Ovary (tissue), 10 donors: ENCODE measurements at regions of chr6 and their contacts with region 1.

Region 1: DNA sequence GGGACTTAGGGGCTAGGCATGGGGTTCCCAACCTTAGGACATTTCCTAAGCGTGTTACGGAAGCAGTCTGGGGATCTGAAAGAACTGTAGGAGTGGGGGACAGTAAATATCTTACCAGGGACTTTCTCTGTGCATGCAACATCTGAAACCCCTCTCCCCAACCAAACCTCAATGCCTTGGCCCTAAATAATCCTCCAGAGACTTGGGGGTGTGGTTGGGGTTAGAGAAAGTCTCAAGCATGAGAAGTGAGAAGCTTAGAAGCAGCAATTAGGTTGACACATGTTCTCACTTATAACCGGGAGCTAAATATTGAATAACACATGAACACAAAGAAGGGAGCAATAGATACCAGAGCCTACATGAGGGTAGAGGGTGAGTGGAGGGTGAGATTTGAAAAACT is 74.7 kb downstream of the HTR1E start:
- DNase-seq: no peak
- H3K4me3 ChIP-seq: no peak overlapping the region
- H3K27ac ChIP-seq: no peak overlapping the region
- H3K4me1 ChIP-seq: no peaks in the 10 kb centered on the region
- H3K27me3 ChIP-seq: no peaks in the 10 kb centered on the region
- CTCF ChIP-seq: no peak
- EP300 ChIP-seq: no peak
- POLR2A ChIP-seq: no peak

Region 2: GRCh38 chr6:86502497-86502896 is 509.5 kb before region 1 on chr6:
- intact Hi-C with region 1: no loop called
- DNase-seq: no peak
- H3K4me3 ChIP-seq: no peak overlapping the region
- H3K27ac ChIP-seq: no peak overlapping the region
- H3K4me1 ChIP-seq: no peaks in the 10 kb centered on the region
- H3K27me3 ChIP-seq: no peaks in the 10 kb centered on the region
- CTCF ChIP-seq: no peak
- EP300 ChIP-seq: no peak
- POLR2A ChIP-seq: no peak

Region 3: DNA sequence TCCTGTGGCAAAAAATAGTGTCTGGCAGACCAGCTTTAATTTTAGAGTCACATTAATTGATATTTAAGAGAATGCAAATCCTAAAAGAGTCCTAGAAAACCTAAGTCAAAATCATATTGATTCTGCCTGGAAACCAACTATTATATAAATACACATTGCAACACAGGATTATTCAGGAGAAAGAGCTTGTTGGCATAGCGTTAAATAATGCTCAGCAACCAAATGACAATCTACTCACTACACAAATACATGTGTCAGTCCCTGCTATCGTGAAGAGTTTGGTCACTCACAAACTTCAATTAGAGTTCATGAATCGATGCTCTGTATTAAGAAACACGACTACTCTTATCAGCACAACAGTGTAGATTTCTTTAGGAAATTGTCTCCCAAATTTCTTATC is 28.7 kb after region 1 on chr6:
- intact Hi-C with region 1: loop called in 1 of 4 experiments (anchors 2 kb)
- DNase-seq: no peak
- H3K4me3 ChIP-seq: no peak overlapping the region
- H3K27ac ChIP-seq: no peak overlapping the region
- H3K4me1 ChIP-seq: no peaks in the 10 kb centered on the region
- H3K27me3 ChIP-seq: no peaks in the 10 kb centered on the region
- CTCF ChIP-seq: no peak
- EP300 ChIP-seq: no peak
- POLR2A ChIP-seq: no peak

Region 4: GRCh38 chr6:87054143-87054833 is 42.3 kb after region 1 on chr6:
- intact Hi-C with region 1: no loop called
- DNase-seq: no peak
- H3K4me3 ChIP-seq: no peak overlapping the region
- H3K27ac ChIP-seq: no peak overlapping the region
- H3K4me1 ChIP-seq: no peaks in the 10 kb centered on the region
- H3K27me3 ChIP-seq: no peaks in the 10 kb centered on the region
- CTCF ChIP-seq: no peak
- EP300 ChIP-seq: no peak
- POLR2A ChIP-seq: no peak

Region 5: DNA sequence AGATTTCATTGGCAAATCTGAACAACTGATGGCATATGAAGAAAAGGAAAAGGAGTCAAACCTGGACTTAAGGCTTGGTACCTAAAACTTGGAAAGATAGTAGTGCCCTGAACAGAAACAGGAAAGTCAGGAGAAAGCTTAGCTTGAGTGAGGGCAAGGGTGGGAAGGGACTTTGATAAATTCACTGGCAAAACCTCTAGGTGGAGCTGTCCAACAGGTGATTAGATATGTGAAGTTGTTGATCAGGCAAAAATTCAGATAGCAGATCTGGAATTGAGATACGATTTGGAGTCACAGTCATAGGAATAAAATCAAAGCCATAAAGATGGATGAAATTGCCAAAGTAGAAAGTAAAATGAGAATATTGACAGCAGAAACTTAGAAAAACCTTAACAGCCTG is 127.2 kb after region 1 on chr6:
- intact Hi-C with region 1: no loop called
- DNase-seq: no peak
- H3K4me3 ChIP-seq: no peak overlapping the region
- H3K27ac ChIP-seq: no peak overlapping the region
- H3K4me1 ChIP-seq: no peaks in the 10 kb centered on the region
- H3K27me3 ChIP-seq: no peaks in the 10 kb centered on the region
- CTCF ChIP-seq: peak in 1 of 3 donors; percentile 11
- EP300 ChIP-seq: no peak
- POLR2A ChIP-seq: no peak